Astrocyte of the cerebellum (primary cell): ENCODE measurements at regions of chr6 and their contacts with region 1.

Region 1: DNA sequence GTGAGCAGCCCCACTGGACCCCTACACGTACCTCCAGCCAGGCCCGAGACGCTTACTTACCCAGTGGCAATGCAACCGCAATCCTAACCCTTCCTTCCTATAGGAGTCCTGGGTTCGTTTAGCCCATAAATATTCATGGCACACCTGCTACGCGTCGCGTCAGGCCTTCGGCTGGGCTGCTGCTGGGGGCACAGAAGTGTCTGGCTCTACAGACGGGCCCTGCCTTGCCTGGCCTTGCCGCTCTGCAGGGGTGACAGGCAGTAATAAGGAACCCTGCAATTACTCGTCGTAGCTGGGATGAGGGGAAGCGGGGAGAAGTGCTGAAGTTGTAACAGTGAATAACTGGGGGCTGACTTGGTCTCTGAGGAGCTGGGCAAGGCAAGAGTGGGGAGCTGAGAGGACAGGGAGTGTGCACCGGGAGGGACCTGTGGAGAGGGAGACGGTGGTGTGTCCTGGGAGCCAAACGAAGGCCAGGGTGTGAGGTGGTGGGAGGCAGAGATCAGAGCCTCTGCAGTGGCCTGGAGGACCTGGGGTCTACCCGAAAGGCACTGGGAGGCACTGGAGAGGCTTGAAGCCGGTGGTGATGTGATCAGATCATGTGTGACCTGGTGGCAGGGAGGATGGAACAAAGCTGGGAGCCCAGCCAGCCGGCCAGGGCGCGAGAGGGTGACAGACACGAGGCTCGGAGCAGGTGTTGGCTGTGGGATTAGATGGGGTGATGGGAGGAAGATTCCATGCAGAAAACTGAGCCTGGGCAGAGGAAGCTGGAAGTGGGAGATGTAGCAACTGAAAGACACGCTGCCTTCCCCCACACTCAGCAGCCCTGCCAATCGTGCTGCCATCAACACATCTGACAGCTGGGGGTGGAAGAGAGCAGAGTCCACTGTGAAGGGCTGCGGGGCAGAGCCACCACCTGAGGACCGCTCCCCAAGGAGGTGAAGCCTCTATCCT is 36.4 kb downstream of the PSMG4 start:
- DNase-seq: no peak
- H3K4me3 ChIP-seq: no peak overlapping the region
- CTCF ChIP-seq: peak; percentile 11

Region 2: DNA sequence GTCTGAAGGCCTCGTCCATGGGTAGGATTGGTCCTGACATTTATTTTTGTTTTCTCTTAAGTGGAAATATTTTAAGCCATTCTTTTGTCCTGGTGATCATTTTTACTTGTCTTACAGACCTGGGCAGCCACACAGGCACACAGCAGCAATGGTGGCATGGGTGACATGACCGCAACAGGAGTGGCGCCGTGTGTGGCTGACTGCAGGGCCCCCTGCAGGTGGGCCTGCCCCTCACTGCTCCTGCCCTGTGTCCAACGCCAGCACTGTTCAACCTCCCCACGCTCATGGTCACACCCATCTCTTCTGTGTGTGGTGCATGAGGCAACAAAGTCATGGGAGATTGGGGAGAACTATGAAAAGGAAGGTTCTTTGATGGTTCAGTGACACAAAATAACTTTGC is 696.3 kb before region 1 on chr6:
- in situ Hi-C with region 1: no loop called
- DNase-seq: no peak
- H3K4me3 ChIP-seq: no peak overlapping the region
- CTCF ChIP-seq: no peak

Region 3: DNA sequence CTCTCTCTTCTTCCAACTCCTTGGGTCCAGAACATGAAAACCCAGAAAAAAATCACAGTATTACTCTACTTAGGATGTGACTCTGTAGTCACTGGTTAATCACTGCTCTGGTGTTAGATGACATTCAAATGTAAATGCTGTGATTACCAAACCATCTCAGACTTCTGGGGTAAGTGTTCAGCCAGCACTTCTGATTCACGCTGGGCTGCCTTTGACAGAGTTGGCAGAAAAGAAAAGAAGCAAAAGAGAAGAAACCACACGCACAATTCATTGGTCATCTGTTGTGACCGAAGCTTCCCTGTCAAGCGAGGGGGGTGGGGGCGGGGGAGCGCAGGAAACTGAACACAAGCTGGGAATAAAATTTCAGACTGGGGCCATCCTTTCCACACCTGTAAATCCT is 46.3 kb after region 1 on chr6:
- in situ Hi-C with region 1: loop called (anchors 5 kb)
- DNase-seq: peak; percentile 93
- H3K4me3 ChIP-seq: no peak overlapping the region
- CTCF ChIP-seq: no peak

Region 4: DNA sequence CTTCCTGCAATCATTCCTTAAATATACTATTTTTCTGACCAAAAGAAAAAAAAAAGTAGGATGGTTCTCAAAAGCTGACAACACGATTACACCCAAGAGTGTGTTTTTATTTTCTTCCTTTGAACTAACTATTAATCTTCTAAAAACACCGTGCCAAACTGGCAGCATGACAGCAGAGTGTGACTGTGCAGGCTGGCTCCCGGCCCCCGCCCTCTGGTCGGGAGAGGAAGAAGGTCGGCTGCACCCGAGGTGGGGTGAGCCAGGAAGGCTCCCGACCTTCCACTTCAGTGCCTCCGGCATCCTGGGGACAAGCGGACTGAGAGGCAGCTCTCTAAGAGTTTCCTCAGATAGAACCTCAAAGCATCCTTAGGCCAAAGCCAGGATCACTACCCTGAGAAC is 132.5 kb after region 1 on chr6:
- in situ Hi-C with region 1: loop called (anchors 5 kb)
- DNase-seq: no peak
- H3K4me3 ChIP-seq: no peak overlapping the region
- CTCF ChIP-seq: no peak